ENCODE measurements at regions of chrX and their contacts with region 1.

Region 1: DNA sequence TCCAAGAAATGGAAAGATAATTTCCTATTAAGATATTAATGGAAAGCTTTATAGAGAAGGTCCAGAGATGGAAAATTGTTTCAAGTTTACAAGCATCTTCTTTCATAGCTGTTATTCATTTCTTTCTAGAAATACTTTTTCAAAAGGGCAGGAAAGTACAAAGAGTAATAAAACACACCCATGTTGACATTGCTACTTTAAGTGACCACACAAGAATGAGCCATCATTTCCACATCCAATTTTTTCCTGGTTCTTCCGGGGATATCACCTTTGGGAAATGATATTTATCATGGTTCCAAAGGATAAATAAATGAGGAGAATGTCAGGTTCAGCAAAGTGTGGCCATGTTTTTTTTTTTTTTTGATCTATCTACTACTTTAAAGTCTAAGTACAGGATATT is 4.5 kb downstream of the GLRA2 start:
- DNase-seq: no peak
- H3K4me3 Mint-ChIP-seq: no peak overlapping the region
- H3K27ac Mint-ChIP-seq: no peak overlapping the region
- H3K4me1 Mint-ChIP-seq: no peaks in the 10 kb centered on the region
- H3K27me3 Mint-ChIP-seq: no peaks in the 10 kb centered on the region
- CTCF ChIP-seq: no peak

Region 2: DNA sequence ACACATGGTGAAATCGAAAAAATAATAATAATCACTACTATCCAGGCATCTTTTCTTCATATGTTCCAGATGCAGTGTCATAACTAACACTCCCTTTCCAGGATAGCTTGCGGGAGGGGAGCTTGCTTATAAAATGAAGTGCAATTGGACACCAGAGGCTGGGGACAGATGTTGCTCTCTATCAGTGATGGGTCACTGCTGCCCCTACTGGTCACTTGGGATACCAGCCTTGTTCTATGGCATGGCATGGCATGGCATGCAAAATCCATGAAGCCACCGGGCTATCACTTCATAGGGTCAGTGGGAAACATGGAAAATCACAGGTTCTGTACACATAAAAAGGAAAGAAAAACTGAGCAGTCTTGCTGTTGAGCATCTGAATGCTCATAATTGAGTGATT is 163.6 kb after region 1 on chrX:
- CTCF ChIA-PET with region 1: no interaction called
- intact Hi-C with region 1: loop called (anchors 10 kb)
- DNase-seq: peak; percentile 63
- H3K4me3 Mint-ChIP-seq: no peak overlapping the region
- H3K27ac Mint-ChIP-seq: no peak overlapping the region
- H3K4me1 Mint-ChIP-seq: no peaks in the 10 kb centered on the region
- H3K27me3 Mint-ChIP-seq: no peaks in the 10 kb centered on the region
- CTCF ChIP-seq: peak; percentile 64

Measured in Calu3 (cell line).